ENCODE measurements at regions of chr2 and their contacts with region 1.

Region 1: DNA sequence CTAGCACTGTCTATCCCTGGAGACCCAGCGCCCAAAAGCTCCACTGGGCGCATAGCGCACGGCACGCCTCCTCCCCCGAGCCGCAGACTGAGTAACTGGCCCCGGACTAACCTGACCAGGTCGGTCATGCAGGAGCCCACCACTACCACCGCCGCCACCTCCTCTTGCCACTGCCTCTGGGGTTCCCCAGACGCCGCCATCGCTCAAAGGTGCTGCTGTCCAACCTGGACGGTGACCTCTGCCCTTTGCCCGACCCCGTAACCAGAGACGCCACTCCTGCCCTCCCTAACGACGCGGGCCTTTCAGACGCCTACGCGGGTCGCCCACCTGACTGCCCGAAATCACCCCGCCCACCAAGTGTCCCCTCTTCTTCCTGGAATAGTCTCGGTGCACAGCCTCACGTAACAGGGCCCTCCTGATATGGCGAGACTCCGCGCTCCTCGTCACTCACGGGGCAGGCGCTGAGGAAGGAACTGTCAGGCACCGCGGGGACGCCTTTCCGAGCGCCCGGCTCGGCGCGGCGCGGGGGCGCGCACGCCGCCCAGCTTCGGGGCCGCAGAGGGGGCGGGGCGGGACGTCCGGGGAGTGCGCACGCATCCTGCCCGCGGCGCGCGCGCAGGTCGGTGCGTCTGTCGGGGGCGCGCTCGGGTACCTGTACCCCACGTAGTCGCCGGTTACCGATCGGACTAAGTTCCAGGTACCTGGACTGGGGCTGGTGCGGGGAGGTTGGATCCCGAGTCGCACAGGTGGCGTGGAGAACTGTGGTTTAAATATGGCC is at the starts of genes BABAM2 and RBKS:
- DNase-seq: peak; percentile 84
- H3K4me3 ChIP-seq: peak within 1 kb of the TSS; percentile 60 to 76 (median 74)
- H3K27ac ChIP-seq: peak within 1 kb of the TSS; percentile 90
- H3K4me1 ChIP-seq: peaks cover 21% of the 10 kb centered on the region
- H3K27me3 ChIP-seq: no peaks in the 10 kb centered on the region
- CTCF ChIP-seq: no peak
- total RNA-seq, gene BABAM2: 27.9 to 35.0 TPM
- total RNA-seq, gene RBKS: 1.1 to 3.8 TPM

Region 2: GRCh38 chr2:27723372-27724144 is 166.8 kb before region 1 on chr2:
- CTCF ChIA-PET with region 1: no interaction called
- dilution Hi-C with region 1: no loop called
- in situ Hi-C with region 1: no loop called
- intact Hi-C with region 1: no loop called
- DNase-seq: peak; percentile 53
- H3K4me3 ChIP-seq: no peak overlapping the region
- H3K27ac ChIP-seq: no peak overlapping the region
- H3K4me1 ChIP-seq: peaks cover 32% of the 10 kb centered on the region
- H3K27me3 ChIP-seq: no peaks in the 10 kb centered on the region
- CTCF ChIP-seq: peak; percentile 78 to 89

Region 3: DNA sequence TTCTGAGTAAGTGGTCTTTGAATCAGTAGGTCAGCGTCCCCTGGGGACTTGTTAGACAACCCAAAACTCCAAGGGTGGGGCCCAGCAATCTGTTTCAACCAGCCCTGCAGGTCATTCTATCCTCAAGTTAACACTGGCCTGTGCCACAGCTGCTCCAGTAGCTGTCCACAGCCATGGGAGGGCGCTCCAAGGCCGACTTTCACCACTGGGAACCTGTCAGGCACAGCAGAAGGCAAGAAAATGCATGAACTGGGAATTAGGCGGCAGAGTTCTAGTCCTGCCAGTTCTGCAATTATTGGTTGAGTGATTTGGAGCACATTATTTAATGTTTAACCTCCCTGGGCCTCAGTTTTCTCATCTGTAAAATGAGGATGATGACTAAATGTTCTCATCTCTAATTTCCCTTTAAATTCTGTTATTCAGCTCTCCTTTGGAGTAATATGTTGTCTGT is 136.2 kb before region 1 on chr2:
- CTCF ChIA-PET with region 1: no interaction called
- dilution Hi-C with region 1: no loop called
- in situ Hi-C with region 1: no loop called
- intact Hi-C with region 1: loop called (anchors 5 kb)
- DNase-seq: peak; percentile 76
- H3K4me3 ChIP-seq: no peak overlapping the region
- H3K27ac ChIP-seq: peak overlapping the region; percentile 91
- H3K4me1 ChIP-seq: peaks cover 21% of the 10 kb centered on the region
- H3K27me3 ChIP-seq: no peaks in the 10 kb centered on the region
- CTCF ChIP-seq: peak; percentile 97 to 99

Region 4: GRCh38 chr2:27798948-27799645 is 91.2 kb before region 1 on chr2:
- CTCF ChIA-PET with region 1: no interaction called
- dilution Hi-C with region 1: no loop called
- in situ Hi-C with region 1: no loop called
- intact Hi-C with region 1: loop called (anchors 2 kb)
- DNase-seq: peak; percentile 100
- H3K4me3 ChIP-seq: no peak overlapping the region
- H3K27ac ChIP-seq: peak overlapping the region; percentile 94
- H3K4me1 ChIP-seq: peaks cover 30% of the 10 kb centered on the region
- H3K27me3 ChIP-seq: no peaks in the 10 kb centered on the region
- CTCF ChIP-seq: no peak

Region 5: DNA sequence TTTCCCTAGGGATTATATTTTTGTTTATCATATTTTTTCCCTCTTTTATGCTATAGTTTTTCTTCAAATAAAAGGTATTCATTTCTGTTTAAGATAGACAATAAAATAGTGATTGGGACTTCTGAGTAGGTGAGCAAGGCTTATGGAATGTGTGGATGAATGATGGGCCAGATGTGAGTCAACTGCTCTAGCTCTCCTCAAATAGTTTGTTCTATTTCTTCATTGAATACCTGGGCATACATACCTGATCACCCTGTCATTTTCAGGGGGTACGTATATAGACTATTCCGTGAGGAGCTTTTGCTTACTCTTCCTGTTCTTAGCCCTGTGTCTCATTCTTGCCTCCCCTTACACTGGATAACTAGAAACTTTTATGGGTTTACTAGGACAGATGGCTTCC is 42.1 kb after region 1 on chr2:
- CTCF ChIA-PET with region 1: no interaction called
- dilution Hi-C with region 1: no loop called
- in situ Hi-C with region 1: no loop called
- intact Hi-C with region 1: loop called (anchors 5 kb)
- DNase-seq: peak; percentile 78
- H3K4me3 ChIP-seq: peak overlapping the region in 1 of 3 experiments; percentile 5
- H3K27ac ChIP-seq: peak overlapping the region; percentile 90
- H3K4me1 ChIP-seq: peaks cover 15% of the 10 kb centered on the region
- H3K27me3 ChIP-seq: no peaks in the 10 kb centered on the region
- CTCF ChIP-seq: no peak

Region 6: DNA sequence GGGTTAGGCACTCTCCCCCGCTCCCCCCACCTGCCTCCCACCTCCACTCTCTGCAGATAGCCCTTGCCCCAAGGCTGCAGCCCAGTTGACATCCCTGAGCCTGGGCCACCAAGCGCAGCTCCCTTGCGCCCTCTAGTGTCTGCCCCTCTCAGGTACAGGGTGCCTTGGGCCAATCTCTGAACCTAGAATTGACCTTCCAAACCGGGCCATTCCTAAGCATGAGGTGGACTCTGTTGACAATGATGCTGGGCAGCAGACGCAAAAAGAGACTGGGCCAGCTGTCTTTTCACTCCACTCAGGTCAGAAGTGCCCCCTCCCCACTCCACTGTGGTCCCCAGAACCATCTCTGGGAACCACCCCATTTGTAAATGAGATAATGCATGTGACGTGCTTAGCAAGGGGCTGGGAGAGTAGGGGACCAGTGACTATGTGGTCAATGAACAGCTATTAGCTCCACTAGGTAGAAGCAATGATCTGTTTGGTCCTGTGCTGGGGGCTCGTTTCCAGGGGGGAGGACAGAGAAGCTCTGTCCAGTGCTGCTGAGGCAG is 562.3 kb after region 1 on chr2:
- CTCF ChIA-PET with region 1: no interaction called
- dilution Hi-C with region 1: no loop called
- in situ Hi-C with region 1: no loop called
- intact Hi-C with region 1: loop called (anchors 5 kb)
- DNase-seq: no peak
- H3K4me3 ChIP-seq: no peak overlapping the region
- H3K27ac ChIP-seq: no peak overlapping the region
- H3K4me1 ChIP-seq: peaks cover 52% of the 10 kb centered on the region
- H3K27me3 ChIP-seq: no peaks in the 10 kb centered on the region
- CTCF ChIP-seq: peak; percentile 98 to 99

Region 7: GRCh38 chr2:29196792-29197788 is 1306.8 kb after region 1 on chr2:
- CTCF ChIA-PET with region 1: no interaction called
- dilution Hi-C with region 1: no loop called
- in situ Hi-C with region 1: no loop called
- intact Hi-C with region 1: no loop called
- DNase-seq: peak; percentile 49
- H3K4me3 ChIP-seq: no peak overlapping the region
- H3K27ac ChIP-seq: no peak overlapping the region
- H3K4me1 ChIP-seq: no peaks in the 10 kb centered on the region
- H3K27me3 ChIP-seq: no peaks in the 10 kb centered on the region
- CTCF ChIP-seq: peak; percentile 78 to 85